K562 (cell line): ENCODE measurements at regions of chr19 and their contacts with region 1.

Region 1: GRCh38 chr19:7340959-7341837 is 7.5 kb upstream of the ARHGEF18 start:
- DNase-seq: peak; percentile 46 to 73 (median 64)
- ATAC-seq: peak; percentile 64
- H3K4me3 ChIP-seq: no peak overlapping the region
- H3K27ac ChIP-seq: no peak overlapping the region
- H3K4me1 ChIP-seq: no peaks in the 10 kb centered on the region
- H3K27me3 ChIP-seq: peaks cover 11 to 48% of the 10 kb centered on the region in 2 experiments; a peak in 3 of 5 replicates
- CTCF ChIP-seq: peak; percentile 87 to 94 (median 88)
- EP300 ChIP-seq: no peak
- POLR2A ChIP-seq: no peak
- RAD21 ChIP-seq: peak; percentile 86 to 94

Region 2: DNA sequence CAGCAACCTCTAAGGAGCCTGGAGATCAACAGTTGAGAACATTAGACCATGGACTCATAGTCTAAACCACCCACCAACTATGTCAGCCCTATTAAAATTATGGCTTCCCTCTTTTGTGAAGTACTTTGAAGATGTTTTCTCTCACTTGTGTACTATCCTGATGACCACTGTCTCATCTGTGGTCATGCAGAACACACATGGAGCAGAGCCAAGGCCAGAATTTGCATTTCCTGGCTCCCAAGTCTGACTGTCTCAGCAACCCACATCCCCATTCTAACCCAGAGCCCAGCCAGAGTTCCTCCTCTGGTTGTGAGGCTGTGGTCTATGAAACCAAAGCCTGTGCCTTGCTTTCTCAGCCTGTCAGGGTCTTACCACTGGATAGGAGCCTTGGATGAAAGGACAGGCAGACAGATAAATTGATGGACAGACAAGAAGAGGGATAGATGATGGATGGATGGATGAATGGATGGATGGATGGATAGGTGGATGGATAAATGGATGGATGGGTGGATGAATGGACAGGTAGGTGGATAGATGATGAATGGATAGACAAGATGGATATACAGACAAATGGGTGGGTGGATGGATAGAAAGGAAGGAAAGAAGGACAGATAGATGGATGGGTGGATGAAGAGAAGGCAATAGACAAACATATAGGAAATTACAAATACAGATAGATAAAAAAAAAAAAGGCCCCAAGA is 236.3 kb before region 1 on chr19:
- CTCF ChIA-PET with region 1: interaction called, 11 read pairs
- POLR2A ChIA-PET with region 1: interaction called, 3 read pairs
- in situ Hi-C with region 1: loop called (anchors 10 kb)
- intact Hi-C with region 1: loop called (anchors 1 kb)
- DNase-seq: no peak
- ATAC-seq: no peak
- H3K4me3 ChIP-seq: no peak overlapping the region
- H3K27ac ChIP-seq: no peak overlapping the region
- H3K4me1 ChIP-seq: peaks cover 0 to 2% of the 10 kb centered on the region in 2 experiments; a peak in 1 of 5 replicates
- H3K27me3 ChIP-seq: peaks cover 2 to 15% of the 10 kb centered on the region in 2 experiments; a peak in 2 of 5 replicates
- CTCF ChIP-seq: no peak
- EP300 ChIP-seq: no peak
- POLR2A ChIP-seq: no peak
- RAD21 ChIP-seq: no peak

Region 3: GRCh38 chr19:7149956-7150705 is 191.1 kb before region 1 on chr19:
- CTCF ChIA-PET with region 1: interaction called, 29 read pairs
- POLR2A ChIA-PET with region 1: no interaction called
- in situ Hi-C with region 1: no loop called
- intact Hi-C with region 1: loop called (anchors 1 kb)
- DNase-seq: no peak
- ATAC-seq: no peak
- H3K4me3 ChIP-seq: no peak overlapping the region
- H3K27ac ChIP-seq: no peak overlapping the region
- H3K4me1 ChIP-seq: no peaks in the 10 kb centered on the region
- H3K27me3 ChIP-seq: peaks cover 0 to 14% of the 10 kb centered on the region in 2 experiments; a peak in 1 of 5 replicates
- CTCF ChIP-seq: no peak
- EP300 ChIP-seq: no peak
- POLR2A ChIP-seq: no peak
- RAD21 ChIP-seq: no peak